ENCODE measurements at regions of chr3 and their contacts with region 1.

Region 1: GRCh38 chr3:171566803-171567422 is 106.7 kb upstream of the TNIK start:
- DNase-seq: no peak
- ATAC-seq: peak in 3 of 8 donors; percentile 25 to 46 (median 45)
- H3K4me3 ChIP-seq: no peak overlapping the region
- H3K27ac ChIP-seq: no peak overlapping the region
- H3K4me1 ChIP-seq: peaks cover 2 to 27% (median 11%) of the 10 kb centered on the region in 9 donors
- H3K27me3 ChIP-seq: no peaks in the 10 kb centered on the region
- CTCF ChIP-seq: peak; percentile 64 to 86 (median 82)

Region 2: GRCh38 chr3:171049861-171050444 is 517.0 kb before region 1 on chr3:
- intact Hi-C with region 1: loop called in 9 of 10 experiments (anchors 2 to 10 kb)
- DNase-seq: peak; percentile 16 to 27
- ATAC-seq: peak; percentile 56 to 82 (median 64)
- H3K4me3 ChIP-seq: no peak overlapping the region
- H3K27ac ChIP-seq: no peak overlapping the region
- H3K4me1 ChIP-seq: peaks cover 0 to 6% (median 0%) of the 10 kb centered on the region in 9 donors
- H3K27me3 ChIP-seq: no peaks in the 10 kb centered on the region
- CTCF ChIP-seq: peak; percentile 30 to 68 (median 63)

Region 3: GRCh38 chr3:171157286-171157685 is 409.6 kb before region 1 on chr3:
- intact Hi-C with region 1: loop called in 2 of 10 experiments (anchors 5 to 10 kb)
- DNase-seq: peak in 1 of 2 donors; percentile 30
- ATAC-seq: peak in 5 of 8 donors; percentile 31 to 67 (median 38)
- H3K4me3 ChIP-seq: no peak overlapping the region
- H3K27ac ChIP-seq: no peak overlapping the region
- H3K4me1 ChIP-seq: peaks cover 0 to 20% (median 0%) of the 10 kb centered on the region in 9 donors
- H3K27me3 ChIP-seq: no peaks in the 10 kb centered on the region
- CTCF ChIP-seq: peak in 4 of 9 donors; percentile 13 to 34 (median 28)

Region 4: GRCh38 chr3:171306631-171307030 is 260.3 kb before region 1 on chr3:
- intact Hi-C with region 1: loop called in 1 of 10 experiments (anchors 10 kb)
- DNase-seq: peak; percentile 59 to 86
- ATAC-seq: peak; percentile 88 to 94 (median 92)
- H3K4me3 ChIP-seq: peak overlapping the region in 5 of 10 donors; percentile 9 to 23 (median 15)
- H3K27ac ChIP-seq: peak overlapping the region; percentile 47 to 90 (median 74)
- H3K4me1 ChIP-seq: peaks cover 0 to 39% (median 21%) of the 10 kb centered on the region in 9 donors
- H3K27me3 ChIP-seq: no peaks in the 10 kb centered on the region
- CTCF ChIP-seq: no peak

Region 5: DNA sequence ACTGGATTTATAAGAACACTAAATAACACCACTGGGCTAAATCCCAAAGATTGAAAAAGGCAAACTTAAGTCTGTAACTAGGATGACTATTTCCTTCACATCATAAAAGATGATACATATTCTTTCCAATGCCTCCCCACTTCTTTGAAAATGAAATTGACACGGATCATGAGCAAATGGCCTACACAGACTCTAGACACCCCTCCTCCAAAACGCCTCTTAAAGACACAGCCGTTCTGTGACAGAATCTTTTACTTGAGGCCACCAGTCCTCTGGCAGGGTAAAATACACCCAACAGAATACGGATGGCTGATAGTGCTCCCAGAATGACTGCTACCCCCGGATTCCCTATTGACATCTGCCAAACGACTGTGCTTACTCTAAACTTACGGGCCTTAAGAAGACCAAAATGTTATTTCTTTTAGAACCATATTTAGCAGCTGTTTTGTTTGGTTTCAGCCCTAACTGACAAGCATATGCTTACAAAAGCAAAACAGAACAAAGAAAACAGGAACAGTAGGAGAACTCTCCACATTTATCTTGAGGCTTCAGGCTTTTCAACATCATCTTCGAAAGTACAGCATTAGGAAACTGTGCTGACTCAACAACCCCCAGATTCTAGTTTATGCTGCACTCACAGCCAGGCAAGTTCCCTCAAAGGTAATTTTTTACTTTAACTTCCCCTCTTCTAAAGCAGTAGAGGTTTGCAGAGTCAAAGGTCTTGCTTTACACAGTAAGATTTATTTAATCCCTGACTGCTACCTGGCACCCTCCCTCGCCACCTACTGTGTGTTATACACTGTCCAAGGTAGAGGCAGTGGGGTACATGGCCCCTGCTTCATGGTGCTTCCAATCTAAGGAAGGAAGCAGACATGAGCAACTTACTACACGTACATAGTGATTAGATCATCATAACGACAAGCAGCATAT is 191.0 kb before region 1 on chr3:
- intact Hi-C with region 1: no loop called
- DNase-seq: no peak
- ATAC-seq: peak in 6 of 8 donors; percentile 12 to 68 (median 34)
- H3K4me3 ChIP-seq: peak overlapping the region in 1 of 10 donors; percentile 10
- H3K27ac ChIP-seq: peak overlapping the region in 4 of 10 donors; percentile 1 to 82 (median 18)
- H3K4me1 ChIP-seq: peaks cover 0 to 61% (median 41%) of the 10 kb centered on the region in 9 donors
- H3K27me3 ChIP-seq: no peaks in the 10 kb centered on the region
- CTCF ChIP-seq: no peak

Measured in heart right ventricle (tissue), 16 donors.